Ascending aorta (tissue), 2 donors: ENCODE measurements at regions of chr6 and their contacts with region 1.

Region 1: GRCh38 chr6:134640975-134641429 is 308.9 kb downstream of the ALDH8A1 start:
- DNase-seq: peak; percentile 59 to 93
- H3K4me3 ChIP-seq: no peak overlapping the region
- H3K27ac ChIP-seq: no peak overlapping the region
- H3K4me1 ChIP-seq: no peaks in the 10 kb centered on the region
- H3K27me3 ChIP-seq: no peaks in the 10 kb centered on the region
- CTCF ChIP-seq: peak; percentile 90 to 94 (median 91)

Region 2: GRCh38 chr6:134161036-134161435 is 480.0 kb before region 1 on chr6:
- intact Hi-C with region 1: loop called (anchors 5 kb)
- DNase-seq: no peak
- H3K4me3 ChIP-seq: no peak overlapping the region
- H3K27ac ChIP-seq: no peak overlapping the region
- H3K4me1 ChIP-seq: no peaks in the 10 kb centered on the region
- H3K27me3 ChIP-seq: no peaks in the 10 kb centered on the region
- CTCF ChIP-seq: no peak

Region 3: GRCh38 chr6:134480593-134480992 is 160.4 kb before region 1 on chr6:
- intact Hi-C with region 1: no loop called
- DNase-seq: no peak
- H3K4me3 ChIP-seq: no peak overlapping the region
- H3K27ac ChIP-seq: no peak overlapping the region
- H3K4me1 ChIP-seq: peaks cover 0 to 5% of the 10 kb centered on the region in 2 donors
- H3K27me3 ChIP-seq: no peaks in the 10 kb centered on the region
- CTCF ChIP-seq: no peak

Region 4: DNA sequence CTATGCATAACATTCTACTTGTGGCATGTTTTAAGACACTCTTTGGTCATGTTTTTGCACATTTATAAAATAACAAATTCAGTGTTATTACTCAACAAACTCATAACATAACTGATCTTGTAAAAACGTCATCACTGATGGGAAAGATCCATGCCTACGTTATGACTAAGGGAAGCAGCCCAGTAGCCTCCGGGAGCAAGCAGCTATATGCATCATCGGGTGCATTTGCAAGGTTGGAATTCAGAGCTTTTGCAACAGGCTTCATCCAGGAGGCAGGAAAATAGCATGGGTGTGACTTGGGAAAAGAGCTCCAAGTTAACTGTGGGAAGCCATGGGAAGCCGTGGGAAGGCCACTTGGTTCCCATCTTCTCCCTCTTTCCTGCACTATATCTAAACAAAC is 51.5 kb before region 1 on chr6:
- intact Hi-C with region 1: no loop called
- DNase-seq: no peak
- H3K4me3 ChIP-seq: no peak overlapping the region
- H3K27ac ChIP-seq: no peak overlapping the region
- H3K4me1 ChIP-seq: no peaks in the 10 kb centered on the region
- H3K27me3 ChIP-seq: no peaks in the 10 kb centered on the region
- CTCF ChIP-seq: no peak

Region 5: GRCh38 chr6:134822920-134823709 is 182.1 kb after region 1 on chr6:
- intact Hi-C with region 1: loop called (anchors 5 kb)
- DNase-seq: no peak
- H3K4me3 ChIP-seq: no peak overlapping the region
- H3K27ac ChIP-seq: no peak overlapping the region
- H3K4me1 ChIP-seq: peaks cover 0 to 6% of the 10 kb centered on the region in 2 donors
- H3K27me3 ChIP-seq: no peaks in the 10 kb centered on the region
- CTCF ChIP-seq: peak; percentile 80 to 82 (median 82)

Region 6: DNA sequence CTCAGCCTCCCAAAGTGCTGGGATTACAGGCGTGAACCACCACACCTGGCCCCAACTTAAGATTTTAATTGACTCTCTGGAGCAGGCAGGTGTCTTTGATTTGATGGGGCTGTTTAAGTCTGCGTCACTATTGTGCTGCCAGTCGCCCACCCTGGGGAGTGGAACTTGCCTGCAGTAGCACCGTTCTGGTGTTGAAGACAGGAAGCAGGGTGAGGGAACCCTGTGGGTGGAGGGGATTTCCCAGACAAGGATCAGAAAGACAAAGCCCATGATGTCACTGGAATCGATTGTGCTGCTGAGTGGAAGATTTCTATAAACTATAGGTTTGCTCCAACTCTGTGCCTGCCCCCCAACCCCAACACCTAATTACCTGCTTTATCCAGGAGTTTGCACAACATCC is 297.9 kb after region 1 on chr6:
- intact Hi-C with region 1: loop called (anchors 5 kb)
- DNase-seq: no peak
- H3K4me3 ChIP-seq: no peak overlapping the region
- H3K27ac ChIP-seq: no peak overlapping the region
- H3K4me1 ChIP-seq: no peaks in the 10 kb centered on the region
- H3K27me3 ChIP-seq: no peaks in the 10 kb centered on the region
- CTCF ChIP-seq: no peak